ENCODE measurements at regions of chr5 and their contacts with region 1.

Region 1: DNA sequence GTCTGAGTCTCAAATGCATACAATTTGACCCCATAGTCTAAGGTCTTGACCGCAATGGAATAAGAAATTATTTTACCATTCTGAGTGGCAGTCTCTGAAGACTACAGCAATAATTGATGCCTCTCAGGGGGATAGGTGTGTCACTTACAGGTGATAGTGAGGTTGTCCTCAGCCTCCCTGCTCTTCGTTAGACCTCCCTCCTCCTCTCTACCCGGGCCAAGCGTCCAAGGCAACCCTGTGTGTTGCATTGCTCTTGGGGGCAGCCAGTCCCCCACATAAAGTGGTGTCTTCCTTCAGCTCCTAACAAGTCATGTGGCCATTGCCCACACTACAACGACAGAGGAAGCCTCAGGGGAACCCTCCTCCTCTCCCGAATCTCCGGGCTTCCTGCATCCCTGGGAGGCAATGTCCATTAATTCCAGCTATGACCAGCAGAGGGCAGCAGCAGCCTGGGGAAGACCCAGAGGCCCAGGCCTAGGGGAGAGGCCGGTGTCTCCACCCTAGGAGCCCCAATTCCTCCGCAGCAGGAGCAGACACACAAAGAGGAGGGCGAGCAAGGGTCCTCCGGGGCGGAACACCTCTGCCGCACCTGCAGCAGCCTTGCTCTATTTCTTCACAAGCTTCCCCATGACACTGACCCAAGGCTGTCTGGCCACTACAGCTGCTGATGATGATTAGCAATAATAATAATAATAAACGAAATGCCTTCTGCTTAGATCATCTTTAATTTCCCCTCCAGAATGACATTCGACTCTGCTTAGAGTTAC is 134.8 kb downstream of the KCNIP1 start:
- DNase-seq: peak; percentile 80
- CTCF ChIP-seq: peak; percentile 91

Region 2: GRCh38 chr5:170434966-170435605 is 203.6 kb before region 1 on chr5:
- CTCF ChIA-PET with region 1: interaction called, 135 read pairs
- POLR2A ChIA-PET with region 1: no interaction called
- DNase-seq: peak; percentile 77
- CTCF ChIP-seq: peak; percentile 94

Region 3: GRCh38 chr5:170623576-170624181 is 15.0 kb before region 1 on chr5:
- CTCF ChIA-PET with region 1: interaction called, 16 read pairs
- POLR2A ChIA-PET with region 1: no interaction called
- DNase-seq: peak; percentile 50
- CTCF ChIP-seq: peak; percentile 38

Region 4: DNA sequence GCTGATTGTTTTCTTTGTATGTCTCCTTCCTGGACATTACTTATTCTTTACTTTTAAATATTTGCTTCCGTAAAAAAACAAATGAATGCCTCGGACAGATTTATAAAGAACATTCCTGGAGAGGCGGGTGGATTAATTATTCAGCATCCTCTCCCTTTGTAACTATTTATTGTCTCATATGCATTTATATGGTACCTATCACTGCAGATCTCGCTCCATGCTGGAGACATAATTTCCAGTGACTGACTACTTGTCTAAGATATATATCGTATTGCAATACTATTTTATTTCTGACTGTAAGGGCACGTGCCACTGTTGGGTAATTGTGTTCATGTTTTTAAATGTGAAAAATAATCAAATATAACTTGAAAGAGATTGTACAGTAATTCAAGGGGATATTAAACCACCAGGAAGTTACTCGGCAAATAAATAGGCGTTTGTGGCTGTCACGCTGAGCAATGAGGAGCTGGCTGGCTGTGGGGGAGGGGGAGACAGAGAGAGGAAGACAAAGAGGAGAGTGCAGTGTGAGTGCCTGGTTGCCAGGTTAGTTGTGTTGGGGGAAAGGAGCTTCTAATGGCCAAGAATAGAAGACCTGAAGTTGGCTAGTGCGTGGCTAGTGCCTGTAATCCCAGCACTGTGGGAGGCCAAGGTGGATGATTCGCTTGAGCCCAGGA is 13.1 kb after region 1 on chr5:
- CTCF ChIA-PET with region 1: interaction called, 18 read pairs
- POLR2A ChIA-PET with region 1: no interaction called
- DNase-seq: no peak
- CTCF ChIP-seq: no peak

Region 5: GRCh38 chr5:170662966-170663365 is 24.3 kb after region 1 on chr5:
- CTCF ChIA-PET with region 1: interaction called, 13 read pairs
- POLR2A ChIA-PET with region 1: no interaction called
- DNase-seq: no peak
- CTCF ChIP-seq: no peak

Region 6: DNA sequence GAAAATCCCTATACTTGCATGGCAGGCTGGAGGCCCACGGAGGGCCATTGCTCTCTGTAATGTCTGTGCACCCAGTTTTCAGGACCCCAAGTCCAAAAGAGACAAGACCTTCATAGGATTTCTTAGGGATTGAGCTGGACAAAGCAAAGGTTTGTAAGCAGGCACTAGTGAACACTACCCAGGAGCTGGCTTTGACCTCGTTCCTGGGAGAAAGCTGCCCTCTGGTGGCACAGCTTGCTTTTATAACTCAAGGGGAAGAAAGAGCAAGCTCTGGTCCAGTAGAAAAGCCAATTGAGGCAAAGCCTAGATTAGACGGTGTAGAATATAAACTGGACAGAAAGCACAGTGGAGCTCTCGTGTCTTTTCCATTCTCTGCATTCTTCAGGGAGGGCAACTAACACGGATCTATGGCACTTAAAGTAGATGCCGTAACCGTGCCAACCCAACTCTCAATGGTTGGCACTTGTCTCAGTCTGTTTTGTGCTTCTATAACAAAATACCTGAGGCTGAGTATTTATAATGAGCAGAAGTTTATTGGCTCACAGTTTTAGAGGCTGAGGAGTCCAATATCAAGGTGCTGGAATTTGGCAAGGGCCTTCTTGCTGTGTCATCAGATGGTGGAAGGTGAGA is 152.8 kb after region 1 on chr5:
- CTCF ChIA-PET with region 1: interaction called, 37 read pairs
- POLR2A ChIA-PET with region 1: no interaction called
- DNase-seq: peak; percentile 52
- CTCF ChIP-seq: peak; percentile 44

Measured in GM10248 (cell line).